ENCODE measurements at regions of chr1 and their contacts with region 1.

Region 1: GRCh38 chr1:40153073-40153770 is 8.0 kb upstream of the RLF start:
- DNase-seq: peak; percentile 79
- H3K4me3 ChIP-seq: peak overlapping the region; percentile 57
- H3K27ac ChIP-seq: peak overlapping the region; percentile 82
- H3K4me1 ChIP-seq: peaks cover 42% of the 10 kb centered on the region
- CTCF ChIP-seq: peak; percentile 97

Region 2: GRCh38 chr1:39804006-39804405 is 349.2 kb before region 1 on chr1:
- CTCF ChIA-PET with region 1: no interaction called
- POLR2A ChIA-PET with region 1: no interaction called
- intact Hi-C with region 1: no loop called
- DNase-seq: no peak
- H3K4me3 ChIP-seq: no peak overlapping the region
- H3K27ac ChIP-seq: no peak overlapping the region
- H3K4me1 ChIP-seq: peaks cover 5% of the 10 kb centered on the region
- CTCF ChIP-seq: no peak

Region 3: DNA sequence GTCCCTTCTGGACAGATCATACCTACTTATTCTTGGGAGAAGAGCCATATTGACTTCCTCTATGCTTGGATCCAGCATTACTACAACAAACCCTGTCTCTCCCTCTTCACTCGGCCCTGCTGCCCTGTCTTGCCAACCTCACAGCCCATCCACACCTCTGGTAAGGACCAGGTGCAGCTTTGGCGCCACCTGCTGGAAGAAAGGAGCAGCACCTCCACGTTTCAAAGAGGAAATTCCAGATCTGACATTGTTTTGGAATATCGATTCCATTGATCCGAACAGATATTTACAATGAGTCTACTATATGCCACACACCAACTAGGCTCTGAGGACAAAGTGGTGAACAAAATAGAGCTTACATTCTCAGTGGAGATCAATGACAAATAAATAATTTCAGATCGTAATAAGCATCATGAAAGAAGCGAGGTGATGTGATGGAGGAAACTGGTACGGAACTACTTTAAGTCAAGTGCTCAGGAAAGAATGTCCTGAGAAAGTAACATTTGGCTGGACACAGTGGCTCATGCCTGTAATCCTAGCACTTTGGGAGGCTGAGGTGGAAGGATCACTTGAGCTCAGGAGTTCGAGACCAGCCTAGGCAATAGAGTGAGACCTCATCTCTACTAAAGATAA is 179.6 kb before region 1 on chr1:
- CTCF ChIA-PET with region 1: no interaction called
- POLR2A ChIA-PET with region 1: no interaction called
- intact Hi-C with region 1: no loop called
- DNase-seq: peak; percentile 77
- H3K4me3 ChIP-seq: no peak overlapping the region
- H3K27ac ChIP-seq: no peak overlapping the region
- H3K4me1 ChIP-seq: no peaks in the 10 kb centered on the region
- CTCF ChIP-seq: peak; percentile 100

Region 4: GRCh38 chr1:40183055-40183710 is 30.0 kb after region 1 on chr1:
- CTCF ChIA-PET with region 1: interaction called, 5 read pairs
- POLR2A ChIA-PET with region 1: interaction called, 4 read pairs
- intact Hi-C with region 1: loop called (anchors 1 kb)
- DNase-seq: peak; percentile 48
- H3K4me3 ChIP-seq: no peak overlapping the region
- H3K27ac ChIP-seq: no peak overlapping the region
- H3K4me1 ChIP-seq: peaks cover 40% of the 10 kb centered on the region
- CTCF ChIP-seq: peak; percentile 92

Region 5: DNA sequence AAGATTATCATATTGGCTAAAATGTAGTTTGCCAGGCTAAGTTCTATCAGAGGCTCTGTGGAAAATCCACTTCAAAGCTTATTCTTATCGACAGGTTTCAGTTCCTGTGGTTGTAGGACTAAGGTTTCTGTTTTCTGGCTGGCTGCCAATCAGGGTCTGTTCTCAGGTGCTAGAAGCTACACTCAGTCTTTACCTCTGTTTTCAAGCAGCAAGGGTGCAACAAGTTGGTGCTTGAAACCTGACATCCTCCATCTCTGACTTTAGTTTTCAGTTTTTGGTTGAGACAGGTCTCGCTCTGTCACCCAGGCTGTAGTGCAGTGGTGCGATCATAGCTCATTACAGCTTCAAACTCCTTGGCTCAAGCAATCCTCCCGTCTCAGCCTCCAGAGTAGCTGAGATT is 79.2 kb after region 1 on chr1:
- CTCF ChIA-PET with region 1: no interaction called
- POLR2A ChIA-PET with region 1: interaction called, 11 read pairs
- intact Hi-C with region 1: no loop called
- DNase-seq: peak; percentile 97
- H3K4me3 ChIP-seq: peak overlapping the region; percentile 17
- H3K27ac ChIP-seq: peak overlapping the region; percentile 83
- H3K4me1 ChIP-seq: peaks cover 28% of the 10 kb centered on the region
- CTCF ChIP-seq: no peak

Region 6: GRCh38 chr1:40257688-40258444 is 104.6 kb after region 1 on chr1 and contains the start of gene ZMPSTE24:
- CTCF ChIA-PET with region 1: interaction called, 4 read pairs
- POLR2A ChIA-PET with region 1: interaction called, 10 read pairs
- intact Hi-C with region 1: loop called (anchors 2 kb)
- DNase-seq: peak; percentile 98
- H3K4me3 ChIP-seq: peak within 1 kb of the TSS; percentile 86
- H3K27ac ChIP-seq: peak within 1 kb of the TSS; percentile 91
- H3K4me1 ChIP-seq: peaks cover 22% of the 10 kb centered on the region
- CTCF ChIP-seq: no peak
- total RNA-seq, gene ZMPSTE24: 13.4 and 15.8 TPM in 2 replicates

Region 7: GRCh38 chr1:40315239-40315794 is 162.1 kb after region 1 on chr1:
- CTCF ChIA-PET with region 1: interaction called, 6 read pairs
- POLR2A ChIA-PET with region 1: interaction called, 5 read pairs
- intact Hi-C with region 1: loop called (anchors 2 kb)
- DNase-seq: peak; percentile 93
- H3K4me3 ChIP-seq: peak overlapping the region; percentile 56
- H3K27ac ChIP-seq: peak overlapping the region; percentile 44
- H3K4me1 ChIP-seq: peaks cover 53% of the 10 kb centered on the region
- CTCF ChIP-seq: peak; percentile 87

Region 8: GRCh38 chr1:40338745-40339424 is 185.7 kb after region 1 on chr1:
- CTCF ChIA-PET with region 1: interaction called, 19 read pairs
- POLR2A ChIA-PET with region 1: interaction called, 11 read pairs
- intact Hi-C with region 1: loop called (anchors 2 kb)
- DNase-seq: peak; percentile 88
- H3K4me3 ChIP-seq: no peak overlapping the region
- H3K27ac ChIP-seq: no peak overlapping the region
- H3K4me1 ChIP-seq: peaks cover 22% of the 10 kb centered on the region
- CTCF ChIP-seq: peak; percentile 99

Measured in OCI-LY7 (cell line).